Spleen (tissue), 13 donors: ENCODE measurements at regions of chr10 and their contacts with region 1.

Region 1: GRCh38 chr10:89391917-89392756 is at the start of gene IFIT1:
- DNase-seq: no peak
- H3K4me3 ChIP-seq: peak within 1 kb of the TSS; percentile 29 to 78 (median 56)
- H3K27ac ChIP-seq: peak within 1 kb of the TSS; percentile 79 to 93 (median 88)
- H3K4me1 ChIP-seq: peaks cover 22 to 49% (median 34%) of the 10 kb centered on the region in 6 donors
- H3K27me3 ChIP-seq: no peaks in the 10 kb centered on the region
- CTCF ChIP-seq: no peak
- POLR2A ChIP-seq: peak in 1 of 3 donors; percentile 71
- total RNA-seq, gene IFIT1: 13.5 to 35.7 (median 24.2) TPM

Region 2: DNA sequence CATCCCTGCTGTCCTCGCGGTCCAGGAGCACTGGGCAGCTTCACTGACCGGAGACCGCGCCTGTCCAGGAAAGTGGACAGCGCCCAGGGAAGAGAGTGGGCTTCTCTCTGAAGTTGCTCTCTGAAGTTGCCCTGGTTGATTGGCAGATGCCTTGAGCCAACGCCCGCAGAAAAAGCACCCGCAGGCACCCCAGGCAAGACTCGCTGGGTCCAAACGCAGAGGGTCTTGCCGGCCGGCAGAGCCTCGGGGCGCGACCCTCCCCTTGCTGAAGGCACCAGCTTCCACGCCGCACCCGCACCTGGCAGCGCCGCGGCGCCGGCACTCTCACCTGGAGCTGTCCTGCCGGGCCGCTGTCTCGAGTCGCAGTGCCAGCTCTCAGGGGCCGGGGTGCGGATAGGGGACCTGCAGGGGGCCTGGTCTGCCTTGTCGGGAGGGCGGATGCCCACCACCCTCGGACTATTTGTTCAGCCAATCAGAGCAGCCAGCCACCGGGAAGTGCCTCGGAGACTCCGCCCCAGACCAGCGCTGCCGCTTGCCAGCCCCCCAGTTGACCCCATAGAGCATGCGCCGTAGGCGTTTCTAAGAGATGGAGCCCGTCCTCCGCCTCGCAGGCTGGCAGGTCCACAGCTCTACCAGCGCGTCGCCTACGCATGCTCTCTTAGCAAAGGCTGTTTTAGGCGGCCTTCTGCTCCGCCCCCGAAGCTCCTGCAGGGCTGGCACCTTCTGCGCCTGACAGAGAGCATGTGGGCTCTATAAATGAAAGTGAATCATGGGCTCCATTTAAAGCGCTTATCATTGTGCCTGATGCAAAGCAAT is 140.5 kb before region 1 on chr10 and contains the start of gene LIPA:
- intact Hi-C with region 1: loop called (anchors 10 kb)
- DNase-seq: peak; percentile 99
- H3K4me3 ChIP-seq: peak within 1 kb of the TSS; percentile 71 to 98 (median 88)
- H3K27ac ChIP-seq: peak within 1 kb of the TSS; percentile 74 to 93 (median 87)
- H3K4me1 ChIP-seq: peaks cover 5 to 44% (median 30%) of the 10 kb centered on the region in 6 donors
- H3K27me3 ChIP-seq: no peaks in the 10 kb centered on the region
- CTCF ChIP-seq: peak in 5 of 11 experiments; percentile 5 to 34 (median 20)
- POLR2A ChIP-seq: peak in 2 of 3 donors; percentile 55 to 91
- total RNA-seq, gene LIPA: 216 to 828 (median 424) TPM